Activated B cell treated with CpG ODN at 0.5 μM for 24 hours (primary cell): ENCODE measurements at regions of chr17 and their contacts with region 1.

Region 1: GRCh38 chr17:80970044-80970761 is 21.4 kb upstream of the CHMP6 start:
- DNase-seq: peak; percentile 58
- ATAC-seq: peak; percentile 91
- H3K4me3 Mint-ChIP-seq: peak overlapping the region; percentile 41
- H3K27ac Mint-ChIP-seq: peak overlapping the region; percentile 24
- H3K4me1 Mint-ChIP-seq: peaks cover 19% of the 10 kb centered on the region
- H3K27me3 Mint-ChIP-seq: peaks cover 4% of the 10 kb centered on the region
- CTCF ChIP-seq: no peak

Region 2: GRCh38 chr17:80575057-80575875 is 394.9 kb before region 1 on chr17:
- CTCF ChIA-PET with region 1: interaction called, 5 read pairs
- POLR2A ChIA-PET with region 1: interaction called, 3 read pairs
- intact Hi-C with region 1: loop called (anchors 1 kb)
- DNase-seq: peak; percentile 81
- ATAC-seq: peak; percentile 100
- H3K4me3 Mint-ChIP-seq: no peak overlapping the region
- H3K27ac Mint-ChIP-seq: no peak overlapping the region
- H3K4me1 Mint-ChIP-seq: peaks cover 7% of the 10 kb centered on the region
- H3K27me3 Mint-ChIP-seq: no peaks in the 10 kb centered on the region
- CTCF ChIP-seq: peak; percentile 100